Naive thymus-derived CD4-positive, alpha-beta T cell (primary cell): ENCODE measurements at regions of chr1 and their contacts with region 1.

Region 1: DNA sequence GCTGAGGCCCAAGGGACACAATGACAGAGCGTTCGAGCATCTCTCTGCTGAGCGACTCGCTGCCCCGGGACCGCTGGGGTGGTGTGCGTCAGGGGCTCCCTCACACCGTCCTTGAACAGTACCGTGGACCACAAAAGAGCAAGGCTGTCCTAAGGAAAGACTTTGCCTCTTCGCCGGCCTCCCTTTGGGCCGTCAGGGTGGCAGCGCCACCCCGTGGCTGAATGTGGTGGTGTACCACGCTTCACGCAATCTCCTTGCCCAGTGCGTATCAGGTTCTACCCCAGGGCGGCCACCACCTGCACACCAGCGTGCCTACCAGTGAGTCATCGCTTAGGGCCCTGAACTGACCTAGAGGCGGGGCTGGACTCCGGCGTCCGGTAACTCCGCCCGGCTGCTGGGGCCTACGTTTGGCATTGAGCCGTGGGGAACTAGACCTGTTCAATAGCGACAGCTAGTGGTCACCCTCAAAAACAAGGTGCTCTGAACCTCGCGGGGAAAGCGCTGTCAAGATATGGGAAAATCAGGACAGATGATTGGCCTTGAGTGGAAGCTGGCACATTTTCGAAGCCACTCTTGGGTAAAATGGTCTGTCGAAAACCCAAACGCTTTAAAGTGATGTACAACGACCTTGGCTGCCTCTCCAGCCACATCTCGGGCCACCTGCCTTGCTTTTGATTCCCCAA is 8.1 kb upstream of the TRAF3IP3 start:
- DNase-seq: peak; percentile 73 to 90 (median 82)
- ATAC-seq: peak; percentile 96
- H3K4me3 ChIP-seq: peak overlapping the region; percentile 76
- H3K4me3 Mint-ChIP-seq: peak overlapping the region; percentile 76 to 95 (median 92)
- H3K27ac ChIP-seq: peak overlapping the region; percentile 73
- H3K27ac Mint-ChIP-seq: peak overlapping the region; percentile 87 to 99 (median 95)
- H3K4me1 ChIP-seq: peaks cover 43 to 44% of the 10 kb centered on the region in 2 donors
- H3K4me1 Mint-ChIP-seq: peaks cover 31 to 74% (median 55%) of the 10 kb centered on the region in 7 donors
- H3K27me3 ChIP-seq: no peaks in the 10 kb centered on the region
- H3K27me3 Mint-ChIP-seq: no peaks in the 10 kb centered on the region

Region 2: DNA sequence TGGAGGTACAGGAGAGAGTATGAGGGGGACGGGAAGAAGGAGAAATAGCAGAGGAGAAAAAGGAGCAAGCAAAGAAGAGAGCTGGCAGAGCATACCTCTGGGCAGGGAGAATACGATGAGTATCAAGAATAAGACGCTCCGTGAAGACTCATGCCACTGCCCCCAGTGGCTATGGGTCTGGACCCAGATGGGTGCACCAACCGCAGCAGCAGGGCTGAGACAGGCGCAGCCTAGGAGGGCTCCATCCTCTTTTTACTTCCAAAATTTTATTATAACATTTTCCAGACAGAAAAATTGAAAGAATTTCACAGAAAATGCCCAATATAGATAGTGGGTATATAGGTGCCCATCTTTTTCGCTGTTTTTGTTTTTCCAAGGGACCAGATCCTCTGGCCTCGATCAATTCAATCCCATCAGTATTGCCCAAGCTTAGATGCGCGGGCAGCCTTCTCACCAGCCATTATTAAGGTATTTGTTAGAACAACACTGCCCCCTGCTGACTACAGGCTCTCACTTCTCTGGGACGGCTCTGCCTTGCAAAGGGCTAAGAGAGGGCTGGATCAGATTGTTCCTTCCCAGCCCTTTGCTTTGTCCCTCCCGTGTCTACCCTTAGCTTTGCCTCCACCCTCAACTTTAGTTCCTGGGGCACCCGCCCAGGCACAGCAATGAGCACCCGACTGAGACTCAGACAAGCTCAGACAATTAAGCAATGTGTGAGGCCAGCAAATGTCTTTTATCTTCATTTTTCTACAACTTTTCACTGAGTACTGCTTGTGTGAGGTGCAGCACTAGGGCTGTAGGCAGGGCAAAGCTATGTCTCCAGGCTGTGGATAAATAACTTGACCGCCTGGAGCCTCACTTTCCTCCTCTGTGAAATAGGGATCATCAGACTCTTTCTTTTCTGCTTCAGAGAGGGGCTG is 181.7 kb before region 1 on chr1:
- CTCF ChIA-PET with region 1: interaction called, 9 read pairs
- POLR2A ChIA-PET with region 1: no interaction called
- intact Hi-C with region 1: loop called (anchors 1 kb)
- DNase-seq: peak; percentile 31 to 73 (median 67)
- ATAC-seq: peak; percentile 84
- H3K4me3 ChIP-seq: no peak overlapping the region
- H3K4me3 Mint-ChIP-seq: peak overlapping the region in 1 of 10 donors; percentile 29
- H3K27ac ChIP-seq: no peak overlapping the region
- H3K27ac Mint-ChIP-seq: peak overlapping the region in 1 of 9 donors; percentile 15
- H3K4me1 ChIP-seq: peaks cover 0 to 11% of the 10 kb centered on the region in 2 donors
- H3K4me1 Mint-ChIP-seq: peaks cover 6 to 26% (median 11%) of the 10 kb centered on the region in 7 donors
- H3K27me3 ChIP-seq: no peaks in the 10 kb centered on the region
- H3K27me3 Mint-ChIP-seq: peaks cover 17 to 47% (median 38%) of the 10 kb centered on the region in 5 donors

Region 3: DNA sequence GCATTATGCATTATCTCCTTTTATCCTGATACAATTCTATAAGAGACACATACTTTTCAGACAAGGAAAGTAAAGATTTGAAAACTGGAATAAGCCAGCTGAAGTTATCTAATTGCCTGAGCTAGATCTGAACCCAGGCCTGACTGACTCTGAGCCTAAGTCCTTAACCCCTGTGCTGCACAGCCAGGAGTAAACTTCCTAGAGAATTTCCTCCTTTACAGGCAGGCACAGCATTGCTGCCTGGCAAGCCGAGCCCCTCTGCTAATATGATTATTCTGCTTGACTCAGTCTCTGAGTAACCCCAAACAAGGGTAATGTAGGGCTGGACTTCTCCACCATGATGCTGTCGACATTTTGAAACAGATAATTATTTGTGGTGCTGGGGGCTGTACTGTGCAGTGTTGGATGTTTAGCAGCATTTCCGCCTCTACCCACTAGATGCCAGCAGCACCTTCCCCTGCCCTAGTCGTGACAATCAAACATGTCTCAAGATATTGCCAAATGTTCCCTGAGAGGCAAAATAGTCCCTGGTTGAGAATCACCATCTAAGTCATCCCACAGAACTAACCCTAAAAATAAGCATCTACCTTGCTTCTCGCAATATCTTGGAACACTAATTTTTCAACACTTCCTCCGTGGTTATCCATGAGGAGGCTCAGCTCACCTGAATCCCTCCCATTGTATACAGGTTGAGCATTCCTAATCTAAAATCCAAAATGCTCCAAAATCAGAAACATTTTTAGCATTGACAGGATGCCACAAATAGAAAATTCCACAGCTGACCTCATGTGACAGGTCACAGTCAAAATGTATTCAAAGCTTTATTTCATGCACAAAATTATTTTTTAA is 145.7 kb before region 1 on chr1:
- CTCF ChIA-PET with region 1: interaction called, 5 read pairs
- POLR2A ChIA-PET with region 1: no interaction called
- intact Hi-C with region 1: loop called (anchors 1 kb)
- DNase-seq: peak in 6 of 9 donors; percentile 23 to 44 (median 34)
- ATAC-seq: peak; percentile 83
- H3K4me3 ChIP-seq: no peak overlapping the region
- H3K4me3 Mint-ChIP-seq: no peak overlapping the region
- H3K27ac ChIP-seq: no peak overlapping the region
- H3K27ac Mint-ChIP-seq: no peak overlapping the region
- H3K4me1 ChIP-seq: no peaks in the 10 kb centered on the region
- H3K4me1 Mint-ChIP-seq: peaks cover 0 to 4% (median 0%) of the 10 kb centered on the region in 7 donors
- H3K27me3 ChIP-seq: no peaks in the 10 kb centered on the region
- H3K27me3 Mint-ChIP-seq: peaks cover 5 to 39% (median 16%) of the 10 kb centered on the region in 5 donors

Region 4: GRCh38 chr1:209651148-209651547 is 96.6 kb before region 1 on chr1:
- CTCF ChIA-PET with region 1: interaction called, 3 read pairs
- POLR2A ChIA-PET with region 1: no interaction called
- intact Hi-C with region 1: loop called in 1 of 2 experiments (anchors 2 kb)
- DNase-seq: peak in 1 of 9 donors; percentile 72
- ATAC-seq: peak; percentile 82
- H3K4me3 ChIP-seq: no peak overlapping the region
- H3K4me3 Mint-ChIP-seq: peak overlapping the region in 1 of 10 donors; percentile 50
- H3K27ac ChIP-seq: no peak overlapping the region
- H3K27ac Mint-ChIP-seq: peak overlapping the region in 2 of 9 donors; percentile 12 to 88
- H3K4me1 ChIP-seq: no peaks in the 10 kb centered on the region
- H3K4me1 Mint-ChIP-seq: peaks cover 11 to 69% (median 16%) of the 10 kb centered on the region in 7 donors
- H3K27me3 ChIP-seq: no peaks in the 10 kb centered on the region
- H3K27me3 Mint-ChIP-seq: no peaks in the 10 kb centered on the region

Region 5: GRCh38 chr1:209692745-209693504 is 54.8 kb before region 1 on chr1:
- CTCF ChIA-PET with region 1: interaction called, 15 read pairs
- POLR2A ChIA-PET with region 1: no interaction called
- intact Hi-C with region 1: loop called (anchors 1 kb)
- DNase-seq: peak; percentile 36 to 66 (median 57)
- ATAC-seq: peak; percentile 75
- H3K4me3 ChIP-seq: no peak overlapping the region
- H3K4me3 Mint-ChIP-seq: no peak overlapping the region
- H3K27ac ChIP-seq: no peak overlapping the region
- H3K27ac Mint-ChIP-seq: peak overlapping the region in 5 of 9 donors; percentile 14 to 74 (median 37)
- H3K4me1 ChIP-seq: peaks cover 0 to 19% of the 10 kb centered on the region in 2 donors
- H3K4me1 Mint-ChIP-seq: peaks cover 16 to 48% (median 30%) of the 10 kb centered on the region in 7 donors
- H3K27me3 ChIP-seq: no peaks in the 10 kb centered on the region
- H3K27me3 Mint-ChIP-seq: no peaks in the 10 kb centered on the region

Region 6: DNA sequence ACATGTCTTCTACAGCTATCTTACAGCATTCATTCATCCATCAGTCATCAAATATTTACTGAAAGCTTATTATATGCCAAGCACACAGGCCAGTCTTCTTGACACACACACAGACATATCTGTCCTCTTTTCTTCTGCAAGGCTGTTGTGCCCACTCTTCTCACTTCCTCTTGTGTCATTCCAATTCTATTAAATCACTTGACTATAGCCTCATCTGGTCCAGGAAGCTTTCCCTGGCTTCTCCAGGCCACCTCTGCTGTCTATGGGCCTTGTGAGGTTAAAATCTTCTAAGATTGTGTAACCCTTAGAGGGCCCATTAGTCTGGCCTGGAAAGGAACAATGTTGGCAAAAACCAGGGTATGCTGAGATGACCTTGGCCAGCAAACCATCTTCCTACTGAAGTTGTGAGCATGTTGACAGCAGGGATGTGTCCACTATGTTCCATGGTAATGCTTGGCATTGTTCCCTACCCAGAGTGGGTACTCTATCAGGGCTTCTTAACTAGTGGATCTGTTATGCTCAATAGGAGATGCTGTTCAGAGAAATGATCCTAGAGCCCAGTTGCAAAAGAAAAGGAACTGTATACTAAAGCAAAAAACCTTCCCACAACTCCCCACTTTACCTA is 13.4 kb after region 1 on chr1:
- CTCF ChIA-PET with region 1: interaction called, 22 read pairs
- POLR2A ChIA-PET with region 1: interaction called, 1,558 read pairs
- intact Hi-C with region 1: loop called (anchors 1 kb)
- DNase-seq: no peak
- ATAC-seq: no peak
- H3K4me3 ChIP-seq: peak overlapping the region; percentile 14
- H3K4me3 Mint-ChIP-seq: peak overlapping the region; percentile 48 to 98 (median 80)
- H3K27ac ChIP-seq: peak overlapping the region; percentile 83
- H3K27ac Mint-ChIP-seq: peak overlapping the region in 7 of 9 donors; percentile 54 to 99 (median 90)
- H3K4me1 ChIP-seq: peaks cover 41 to 70% of the 10 kb centered on the region in 2 donors
- H3K4me1 Mint-ChIP-seq: peaks cover 67 to 90% (median 79%) of the 10 kb centered on the region in 7 donors
- H3K27me3 ChIP-seq: no peaks in the 10 kb centered on the region
- H3K27me3 Mint-ChIP-seq: no peaks in the 10 kb centered on the region

Region 7: GRCh38 chr1:209784265-209785169 is 36.8 kb after region 1 on chr1 and contains the start of gene C1orf74:
- CTCF ChIA-PET with region 1: interaction called, 5 read pairs
- POLR2A ChIA-PET with region 1: interaction called, 1,558 read pairs
- intact Hi-C with region 1: loop called (anchors 1 kb)
- DNase-seq: peak; percentile 97 to 100 (median 99)
- ATAC-seq: peak; percentile 99
- H3K4me3 ChIP-seq: peak within 1 kb of the TSS; percentile 65
- H3K4me3 Mint-ChIP-seq: peak within 1 kb of the TSS; percentile 86 to 97 (median 92)
- H3K27ac ChIP-seq: peak within 1 kb of the TSS; percentile 90
- H3K27ac Mint-ChIP-seq: peak within 1 kb of the TSS; percentile 92 to 99 (median 97)
- H3K4me1 ChIP-seq: peaks cover 11 to 19% of the 10 kb centered on the region in 2 donors
- H3K4me1 Mint-ChIP-seq: peaks cover 9 to 63% (median 37%) of the 10 kb centered on the region in 7 donors
- H3K27me3 ChIP-seq: no peaks in the 10 kb centered on the region
- H3K27me3 Mint-ChIP-seq: peaks cover 5 to 9% (median 8%) of the 10 kb centered on the region in 5 donors
- total RNA-seq, gene C1orf74: 0.51 to 1.5 (median 1.3) TPM

Region 8: GRCh38 chr1:209873067-209873799 is 125.5 kb after region 1 on chr1:
- CTCF ChIA-PET with region 1: no interaction called
- POLR2A ChIA-PET with region 1: no interaction called
- intact Hi-C with region 1: no loop called
- DNase-seq: no peak
- ATAC-seq: no peak
- H3K4me3 ChIP-seq: no peak overlapping the region
- H3K4me3 Mint-ChIP-seq: no peak overlapping the region
- H3K27ac ChIP-seq: no peak overlapping the region
- H3K27ac Mint-ChIP-seq: no peak overlapping the region
- H3K4me1 ChIP-seq: no peaks in the 10 kb centered on the region
- H3K4me1 Mint-ChIP-seq: peaks cover 0 to 2% (median 0%) of the 10 kb centered on the region in 7 donors
- H3K27me3 ChIP-seq: peaks cover 0 to 5% of the 10 kb centered on the region in 2 donors
- H3K27me3 Mint-ChIP-seq: peaks cover 33 to 56% (median 42%) of the 10 kb centered on the region in 5 donors

Region 9: DNA sequence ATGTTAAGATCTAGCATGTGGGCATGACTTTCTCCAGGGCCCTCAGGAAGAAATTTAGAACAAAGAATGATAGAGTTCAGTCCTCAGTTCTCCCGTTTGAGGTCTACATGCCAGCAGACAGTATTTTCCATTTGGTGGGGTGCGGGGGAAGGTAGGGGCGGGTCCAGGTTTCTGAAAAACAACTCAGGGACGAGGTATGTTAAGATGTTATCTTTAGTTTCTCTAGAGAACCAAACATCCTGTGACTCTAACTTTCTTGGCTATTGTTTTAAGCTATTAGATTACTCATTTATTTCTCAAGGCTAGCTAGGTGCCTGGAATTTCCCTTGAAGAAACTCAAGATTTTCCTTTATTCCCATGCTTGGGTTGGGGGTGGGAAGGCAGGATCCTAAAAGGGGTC is 148.0 kb after region 1 on chr1:
- CTCF ChIA-PET with region 1: no interaction called
- POLR2A ChIA-PET with region 1: no interaction called
- intact Hi-C with region 1: no loop called
- DNase-seq: no peak
- ATAC-seq: no peak
- H3K4me3 ChIP-seq: no peak overlapping the region
- H3K4me3 Mint-ChIP-seq: peak overlapping the region in 1 of 10 donors; percentile 16
- H3K27ac ChIP-seq: no peak overlapping the region
- H3K27ac Mint-ChIP-seq: peak overlapping the region in 5 of 9 donors; percentile 3 to 68 (median 8)
- H3K4me1 ChIP-seq: no peaks in the 10 kb centered on the region
- H3K4me1 Mint-ChIP-seq: peaks cover 1 to 10% (median 9%) of the 10 kb centered on the region in 7 donors
- H3K27me3 ChIP-seq: no peaks in the 10 kb centered on the region
- H3K27me3 Mint-ChIP-seq: peaks cover 4 to 32% (median 13%) of the 10 kb centered on the region in 5 donors